ENCODE measurements at regions of chr12 and their contacts with region 1.

Region 1: GRCh38 chr12:49366652-49367380 is 446 bp upstream of the SPATS2 start:
- DNase-seq: peak; percentile 72 to 95 (median 82)
- ATAC-seq: peak; percentile 90
- H3K4me3 ChIP-seq: peak overlapping the region; percentile 90
- H3K4me3 Mint-ChIP-seq: peak overlapping the region; percentile 71 to 97 (median 88)
- H3K27ac ChIP-seq: peak overlapping the region; percentile 87
- H3K27ac Mint-ChIP-seq: peak overlapping the region; percentile 65 to 97 (median 94)
- H3K4me1 ChIP-seq: peaks cover 0 to 15% of the 10 kb centered on the region in 2 donors
- H3K4me1 Mint-ChIP-seq: peaks cover 11 to 39% (median 31%) of the 10 kb centered on the region in 7 donors
- H3K27me3 ChIP-seq: no peaks in the 10 kb centered on the region
- H3K27me3 Mint-ChIP-seq: peaks cover 0 to 2% (median 0%) of the 10 kb centered on the region in 5 donors

Region 2: GRCh38 chr12:49388682-49389386 is 22.0 kb after region 1 on chr12:
- CTCF ChIA-PET with region 1: no interaction called
- POLR2A ChIA-PET with region 1: interaction called, 8 read pairs
- intact Hi-C with region 1: loop called in 1 of 2 experiments (anchors 1 kb)
- DNase-seq: peak; percentile 29 to 66 (median 56)
- ATAC-seq: peak; percentile 96
- H3K4me3 ChIP-seq: no peak overlapping the region
- H3K4me3 Mint-ChIP-seq: peak overlapping the region in 9 of 10 donors; percentile 12 to 74 (median 63)
- H3K27ac ChIP-seq: no peak overlapping the region
- H3K27ac Mint-ChIP-seq: peak overlapping the region in 1 of 9 donors; percentile 36
- H3K4me1 ChIP-seq: no peaks in the 10 kb centered on the region
- H3K4me1 Mint-ChIP-seq: peaks cover 0 to 11% (median 4%) of the 10 kb centered on the region in 7 donors
- H3K27me3 ChIP-seq: no peaks in the 10 kb centered on the region
- H3K27me3 Mint-ChIP-seq: no peaks in the 10 kb centered on the region